HCT116 (cell line): ENCODE measurements at regions of chr17 and their contacts with region 1.

Region 1: DNA sequence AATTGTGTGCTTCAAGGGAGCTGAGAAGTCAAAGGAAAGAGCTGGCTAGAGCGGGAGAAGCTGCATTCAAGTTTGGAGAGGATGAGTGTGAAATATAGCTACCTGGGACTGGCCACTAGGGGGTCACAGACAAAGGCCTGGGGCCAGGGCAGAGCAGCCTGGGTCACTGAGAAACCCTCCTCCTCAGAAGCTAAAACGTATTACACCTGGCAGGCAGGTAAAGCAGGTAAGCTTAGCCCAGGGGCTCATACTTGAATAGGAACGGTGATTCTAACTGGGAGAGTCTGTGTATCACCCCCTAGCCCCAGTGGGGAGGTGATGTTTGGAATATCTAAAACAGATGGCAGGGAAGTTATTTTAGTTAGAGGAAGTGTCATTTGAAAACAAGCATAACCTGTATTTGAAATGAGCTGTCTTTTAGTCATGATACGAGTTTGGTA is 6.8 kb downstream of the KRT37 start:
- DNase-seq: no peak
- ATAC-seq: peak; percentile 96
- H3K4me3 ChIP-seq: no peak overlapping the region
- H3K27ac ChIP-seq: no peak overlapping the region
- H3K4me1 ChIP-seq: peaks cover 15 to 44% of the 10 kb centered on the region in 2 experiments
- H3K27me3 ChIP-seq: no peaks in the 10 kb centered on the region
- CTCF ChIP-seq: peak; percentile 45 to 81 (median 73); a peak in 5 of 6 replicates
- POLR2A ChIP-seq: no peak
- RAD21 ChIP-seq: peak; percentile 62

Region 2: DNA sequence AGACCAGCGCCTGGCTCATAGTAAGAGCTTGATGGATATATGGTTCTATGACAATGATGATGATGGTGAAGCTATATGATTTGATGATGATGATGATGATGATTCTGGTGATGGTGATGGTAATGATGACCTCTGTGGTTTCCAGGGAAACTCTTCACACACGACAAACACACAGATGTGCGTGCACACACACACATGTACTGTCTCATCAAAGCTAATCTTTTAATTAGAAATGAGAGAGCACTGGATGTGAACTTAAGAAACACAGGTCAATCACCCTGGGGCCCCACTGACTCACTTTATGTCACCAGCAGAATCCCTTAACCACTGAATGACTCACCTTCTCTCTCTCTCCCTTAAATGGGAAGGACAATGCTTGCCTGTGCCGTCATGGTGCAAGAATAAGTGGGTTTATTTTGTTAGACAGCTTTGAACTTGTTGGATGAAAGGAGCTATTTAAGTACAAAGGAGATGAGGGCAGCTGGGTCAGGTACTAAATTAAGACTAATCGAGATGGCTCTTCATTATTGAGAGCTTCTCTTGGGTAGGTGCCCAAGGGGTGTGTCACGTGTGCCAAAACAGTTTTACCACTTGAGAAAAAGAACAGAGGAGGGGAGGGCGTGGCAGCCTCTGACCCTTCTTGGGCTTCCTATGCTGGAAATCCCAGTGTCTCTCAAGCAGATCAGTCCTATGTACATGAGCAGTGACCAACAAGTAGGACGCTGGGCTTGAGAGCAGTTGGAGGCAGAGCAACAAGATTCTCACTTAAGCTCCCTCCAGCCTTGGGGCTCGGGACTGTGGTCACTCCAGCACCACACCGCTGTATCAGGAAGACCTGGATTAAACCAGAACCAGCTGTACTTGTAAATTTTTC is 13.6 kb before region 1 on chr17:
- CTCF ChIA-PET with region 1: interaction called, 16 read pairs
- POLR2A ChIA-PET with region 1: interaction called, 5 read pairs
- RAD21 ChIA-PET with region 1: no interaction called
- intact Hi-C with region 1: no loop called
- DNase-seq: peak; percentile 99
- ATAC-seq: peak; percentile 84
- H3K4me3 ChIP-seq: no peak overlapping the region
- H3K27ac ChIP-seq: peak overlapping the region; percentile 78
- H3K4me1 ChIP-seq: peaks cover 43 to 73% of the 10 kb centered on the region in 2 experiments
- H3K27me3 ChIP-seq: no peaks in the 10 kb centered on the region
- CTCF ChIP-seq: no peak
- POLR2A ChIP-seq: no peak
- RAD21 ChIP-seq: peak; percentile 56